ENCODE measurements at regions of chr10 and their contacts with region 1.

Region 1: GRCh38 chr10:114767101-114767985 is 54.2 kb upstream of the FHIP2A start:
- DNase-seq: peak; percentile 79

Region 2: DNA sequence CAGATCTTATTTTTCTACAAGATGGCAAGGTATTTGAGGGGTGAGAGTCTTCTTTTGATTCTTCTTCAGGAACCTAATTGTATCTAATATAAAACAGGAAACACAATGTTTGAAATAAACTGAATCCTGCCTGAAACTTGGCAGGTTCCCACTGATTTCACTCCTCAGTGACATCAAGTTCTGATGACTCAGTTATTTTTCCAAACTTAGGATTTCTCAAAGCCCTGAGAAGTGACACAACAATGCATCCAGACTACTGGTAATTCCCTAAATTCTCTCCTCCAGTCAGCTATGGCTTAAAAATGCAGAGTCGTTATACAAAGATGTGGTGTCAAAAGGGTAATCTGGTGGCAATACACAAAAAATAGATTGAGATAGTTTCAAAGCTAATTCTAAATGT is 190.2 kb before region 1 on chr10:
- intact Hi-C with region 1: no loop called
- DNase-seq: no peak

Region 3: GRCh38 chr10:114720685-114721278 is 46.6 kb before region 1 on chr10:
- intact Hi-C with region 1: loop called (anchors 5 kb)
- DNase-seq: no peak